PC-9 (cell line): ENCODE measurements at regions of chr10 and their contacts with region 1.

Region 1: DNA sequence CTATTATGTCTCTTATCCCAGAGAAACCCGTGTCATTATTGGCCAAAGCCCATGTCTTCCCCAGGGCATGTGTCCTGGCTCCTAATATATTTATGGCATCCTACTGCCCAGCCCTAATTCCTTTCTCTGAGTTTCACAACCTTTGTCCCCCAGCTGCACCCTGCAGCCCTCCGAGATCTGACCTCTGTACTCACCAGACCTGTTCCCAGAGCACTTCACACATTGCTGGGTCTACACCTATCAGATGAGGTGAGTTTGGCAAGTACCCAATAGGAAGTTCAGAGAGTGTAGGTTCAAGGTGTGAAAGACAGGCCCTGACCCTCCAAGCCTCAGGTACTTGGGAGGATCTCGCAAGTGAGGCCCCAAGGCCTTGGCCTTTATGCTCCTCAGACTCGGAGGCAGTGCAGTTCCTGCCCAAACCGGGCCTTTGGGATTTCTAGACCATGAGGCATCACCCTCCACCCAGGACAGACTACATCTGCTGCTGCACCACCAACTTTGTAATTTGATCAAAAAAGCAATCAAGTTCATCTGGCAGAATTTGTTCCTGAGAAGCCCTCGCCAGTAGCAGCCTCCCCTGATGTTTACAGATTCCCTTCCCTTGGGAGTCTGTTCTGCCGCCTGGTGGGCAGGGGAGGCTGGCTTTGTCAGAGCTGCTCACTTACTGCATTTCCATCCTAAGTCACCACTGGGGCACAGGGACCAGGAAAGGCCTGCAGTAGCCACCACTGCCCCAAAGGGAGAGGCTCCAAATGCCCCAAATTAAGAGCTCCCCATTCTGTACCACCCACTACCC is 2.2 kb downstream of the CAMK2G start:
- DNase-seq: peak; percentile 94 to 100
- H3K4me3 ChIP-seq: peak overlapping the region; percentile 64
- H3K27ac ChIP-seq: peak overlapping the region; percentile 88
- H3K4me1 ChIP-seq: peaks cover 75% of the 10 kb centered on the region
- H3K27me3 ChIP-seq: no peaks in the 10 kb centered on the region
- CTCF ChIP-seq: peak; percentile 58; the same call in 1 of the 2 replicates

Region 2: DNA sequence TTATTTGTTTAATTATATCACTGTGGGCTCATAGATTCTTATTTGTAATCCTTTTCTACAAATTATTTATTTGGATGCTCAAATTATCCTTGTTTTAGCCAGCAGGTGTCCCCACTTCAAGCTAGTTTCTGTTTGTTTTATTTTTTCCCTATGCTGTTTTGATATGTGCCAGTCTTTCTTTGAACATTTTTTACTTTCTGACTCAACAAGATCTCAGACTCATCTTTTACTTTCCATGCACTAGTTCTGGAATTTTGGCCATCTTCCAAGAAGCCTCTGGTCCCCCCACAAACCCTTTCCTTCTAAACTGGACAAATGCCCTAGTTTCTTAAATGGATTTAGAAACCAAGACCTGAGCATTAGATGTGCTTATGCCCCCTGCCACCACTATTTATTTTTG is 608.2 kb before region 1 on chr10:
- CTCF ChIA-PET with region 1: no interaction called
- POLR2A ChIA-PET with region 1: no interaction called
- intact Hi-C with region 1: no loop called
- DNase-seq: peak in 1 of 2 experiments; percentile 43
- H3K4me3 ChIP-seq: no peak overlapping the region
- H3K27ac ChIP-seq: no peak overlapping the region; the same call in 1 of the 2 replicates
- H3K4me1 ChIP-seq: peaks cover 20% of the 10 kb centered on the region
- H3K27me3 ChIP-seq: no peaks in the 10 kb centered on the region
- CTCF ChIP-seq: peak; percentile 80

Region 3: DNA sequence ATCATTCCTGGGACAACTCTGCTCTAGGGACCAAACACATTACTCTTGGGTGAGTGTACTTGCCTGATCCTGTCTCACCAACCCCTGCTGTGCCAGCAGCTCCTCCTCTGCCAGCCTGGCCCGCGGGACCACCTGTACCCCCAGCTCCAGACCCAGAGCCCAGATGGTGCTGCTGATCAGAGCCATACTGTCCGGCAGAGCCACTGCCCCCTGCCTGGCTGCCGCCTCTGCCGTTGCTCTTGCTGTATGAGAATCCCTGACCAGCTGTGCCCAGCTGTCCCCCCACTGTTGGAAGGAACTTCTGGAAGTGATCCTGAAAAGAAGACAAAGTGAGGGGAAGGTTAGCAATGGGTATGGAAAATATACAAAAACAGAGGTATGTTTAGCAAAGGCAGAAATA is 237.7 kb before region 1 on chr10:
- CTCF ChIA-PET with region 1: no interaction called
- POLR2A ChIA-PET with region 1: no interaction called
- intact Hi-C with region 1: no loop called
- DNase-seq: no peak
- H3K4me3 ChIP-seq: no peak overlapping the region
- H3K27ac ChIP-seq: no peak overlapping the region
- H3K4me1 ChIP-seq: no peaks in the 10 kb centered on the region
- H3K27me3 ChIP-seq: no peaks in the 10 kb centered on the region
- CTCF ChIP-seq: no peak

Region 4: GRCh38 chr10:74134240-74134820 is 262.2 kb after region 1 on chr10:
- CTCF ChIA-PET with region 1: no interaction called
- POLR2A ChIA-PET with region 1: interaction called, 22 read pairs
- intact Hi-C with region 1: no loop called
- DNase-seq: no peak
- H3K4me3 ChIP-seq: no peak overlapping the region
- H3K27ac ChIP-seq: no peak overlapping the region
- H3K4me1 ChIP-seq: no peaks in the 10 kb centered on the region
- H3K27me3 ChIP-seq: no peaks in the 10 kb centered on the region
- CTCF ChIP-seq: no peak